ENCODE measurements at regions of chr6 and their contacts with region 1.

Region 1: GRCh38 chr6:75526502-75527127 is 33.0 kb upstream of the FILIP1 start:
- DNase-seq: peak; percentile 62
- H3K4me3 ChIP-seq: no peak overlapping the region
- H3K27ac ChIP-seq: no peak overlapping the region
- H3K4me1 ChIP-seq: peaks cover 0 to 20% (median 0%) of the 10 kb centered on the region in 4 donors
- H3K27me3 ChIP-seq: no peaks in the 10 kb centered on the region
- CTCF ChIP-seq: peak; percentile 62 to 77 (median 70)
- EP300 ChIP-seq: no peak
- POLR2A ChIP-seq: no peak

Region 2: DNA sequence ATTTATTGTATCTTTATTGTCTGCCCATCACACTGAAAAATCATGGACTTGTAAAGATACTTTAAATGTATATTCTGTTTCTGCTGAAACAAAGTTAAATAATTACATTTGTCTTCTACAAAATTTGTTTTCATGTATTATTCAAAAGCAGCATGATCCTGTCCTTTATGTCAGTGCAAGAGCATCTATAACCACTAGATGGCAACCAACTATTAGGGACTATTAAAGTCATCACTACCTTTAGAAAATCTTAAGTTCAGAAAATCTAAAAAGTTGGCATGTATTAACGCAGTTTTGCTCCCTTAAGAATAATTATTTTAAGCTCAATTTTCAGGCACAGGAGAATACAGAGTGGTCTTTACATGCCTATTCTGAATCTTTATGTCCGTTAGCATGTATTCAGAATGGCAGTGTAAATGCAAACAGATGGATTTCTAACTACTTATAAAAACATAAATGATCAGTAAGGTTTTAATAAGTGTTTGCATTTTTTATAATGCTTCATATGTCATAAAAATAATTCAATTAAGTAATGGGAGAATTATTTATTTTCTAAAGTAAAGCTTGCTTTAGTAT is 259.8 kb before region 1 on chr6:
- in situ Hi-C with region 1: loop called in 1 of 4 experiments (anchors 10 kb)
- intact Hi-C with region 1: loop called (anchors 10 kb)
- DNase-seq: no peak
- H3K4me3 ChIP-seq: no peak overlapping the region
- H3K27ac ChIP-seq: no peak overlapping the region
- H3K4me1 ChIP-seq: peaks cover 0 to 31% (median 19%) of the 10 kb centered on the region in 4 donors
- H3K27me3 ChIP-seq: no peaks in the 10 kb centered on the region
- CTCF ChIP-seq: peak; percentile 62 to 84 (median 75)
- EP300 ChIP-seq: no peak
- POLR2A ChIP-seq: no peak

Region 3: GRCh38 chr6:75296811-75297779 is 229.5 kb before region 1 on chr6:
- in situ Hi-C with region 1: loop called in 3 of 4 experiments (anchors 10 to 25 kb)
- intact Hi-C with region 1: no loop called
- DNase-seq: no peak
- H3K4me3 ChIP-seq: no peak overlapping the region
- H3K27ac ChIP-seq: no peak overlapping the region
- H3K4me1 ChIP-seq: peaks cover 0 to 28% (median 12%) of the 10 kb centered on the region in 4 donors
- H3K27me3 ChIP-seq: no peaks in the 10 kb centered on the region
- CTCF ChIP-seq: peak; percentile 64 to 79 (median 72)
- EP300 ChIP-seq: no peak
- POLR2A ChIP-seq: no peak

Region 4: DNA sequence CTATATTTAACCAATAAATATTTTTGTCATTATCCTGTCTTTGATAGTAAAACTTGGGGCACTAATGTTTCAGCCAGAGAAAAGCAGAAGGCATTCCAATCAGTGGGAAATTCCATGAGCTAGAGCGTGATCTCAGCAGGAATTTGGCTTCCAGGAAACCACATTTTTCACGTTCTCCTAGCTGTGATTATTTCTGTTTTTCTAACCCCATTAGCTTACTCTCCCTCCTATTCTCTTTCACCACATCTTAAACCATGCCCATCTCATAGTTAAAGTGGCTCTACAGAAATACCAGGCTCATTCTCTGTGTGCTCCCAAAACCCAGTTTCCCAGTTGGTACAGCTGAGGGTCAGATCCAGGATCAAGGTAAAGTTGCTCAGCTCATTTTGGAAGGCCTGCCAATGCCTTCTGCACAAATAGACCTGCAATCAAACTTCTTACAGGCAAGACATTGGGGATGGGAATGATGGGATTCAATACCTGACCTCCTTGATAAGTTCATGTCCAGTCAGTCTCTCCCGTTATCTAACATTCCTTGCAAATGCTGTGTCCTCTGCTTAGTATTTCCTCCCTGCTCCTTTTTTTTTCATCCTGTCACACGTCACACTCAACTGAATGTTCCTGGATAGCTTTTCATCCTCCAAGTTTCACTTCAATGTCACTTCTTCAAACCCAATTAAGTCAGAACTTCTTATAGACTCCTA is 209.0 kb before region 1 on chr6:
- in situ Hi-C with region 1: loop called in 1 of 4 experiments (anchors 25 kb)
- intact Hi-C with region 1: no loop called
- DNase-seq: no peak
- H3K4me3 ChIP-seq: no peak overlapping the region
- H3K27ac ChIP-seq: no peak overlapping the region
- H3K4me1 ChIP-seq: no peaks in the 10 kb centered on the region
- H3K27me3 ChIP-seq: no peaks in the 10 kb centered on the region
- CTCF ChIP-seq: no peak
- EP300 ChIP-seq: no peak
- POLR2A ChIP-seq: no peak

Region 5: DNA sequence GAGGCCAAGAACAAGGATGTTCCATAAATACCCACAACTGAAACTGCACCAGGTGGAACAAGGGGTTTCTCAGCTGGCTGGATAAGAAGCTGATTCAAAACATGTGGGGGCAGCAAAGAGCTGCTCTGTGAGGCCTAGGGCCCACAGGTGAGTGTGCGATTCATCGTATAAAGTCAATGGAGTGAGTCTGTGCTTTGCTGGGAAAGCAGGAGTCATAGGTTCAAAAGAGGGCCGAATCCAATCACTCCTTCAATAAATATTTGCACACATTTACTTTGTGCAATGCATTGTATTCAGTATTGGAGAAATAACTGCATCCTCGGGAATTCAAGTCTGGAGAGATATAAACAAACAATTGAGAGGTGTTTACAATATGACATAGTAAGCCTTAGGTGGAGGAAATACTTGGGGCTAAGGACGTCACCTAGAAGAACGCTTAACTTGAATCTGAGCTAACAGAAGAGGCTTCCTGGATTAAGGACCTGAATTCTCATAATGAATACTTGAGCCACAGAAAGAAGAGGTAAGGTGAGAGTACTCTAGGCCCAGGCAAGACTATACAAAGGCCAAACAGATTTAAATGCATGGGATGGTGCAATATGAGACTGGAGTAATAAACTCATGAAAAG is 158.3 kb before region 1 on chr6:
- in situ Hi-C with region 1: no loop called
- intact Hi-C with region 1: loop called (anchors 5 kb)
- DNase-seq: peak; percentile 15
- H3K4me3 ChIP-seq: no peak overlapping the region
- H3K27ac ChIP-seq: peak overlapping the region in 3 of 4 donors; percentile 48 to 54 (median 49)
- H3K4me1 ChIP-seq: peaks cover 0 to 14% (median 0%) of the 10 kb centered on the region in 4 donors
- H3K27me3 ChIP-seq: no peaks in the 10 kb centered on the region
- CTCF ChIP-seq: peak; percentile 26 to 47 (median 33)
- EP300 ChIP-seq: no peak
- POLR2A ChIP-seq: no peak

Region 6: GRCh38 chr6:75766387-75766786 is 239.8 kb after region 1 on chr6:
- in situ Hi-C with region 1: no loop called
- intact Hi-C with region 1: no loop called
- DNase-seq: no peak
- H3K4me3 ChIP-seq: no peak overlapping the region
- H3K27ac ChIP-seq: no peak overlapping the region
- H3K4me1 ChIP-seq: peaks cover 0 to under 1% (median 0%) of the 10 kb centered on the region in 4 donors
- H3K27me3 ChIP-seq: no peaks in the 10 kb centered on the region
- CTCF ChIP-seq: no peak
- EP300 ChIP-seq: no peak
- POLR2A ChIP-seq: no peak

Measured in transverse colon (tissue), 4 donors.